A549 (cell line): ENCODE measurements at regions of chr1 and their contacts with region 1.

Region 1: GRCh38 chr1:23344111-23344986 is at the start of gene HNRNPR:
- DNase-seq: peak; percentile 90 to 100
- ATAC-seq: peak; percentile 97 to 98
- H3K4me3 ChIP-seq: peak within 1 kb of the TSS; percentile 93
- H3K27ac ChIP-seq: peak within 1 kb of the TSS; percentile 98 to 100
- H3K4me1 ChIP-seq: peaks cover 27% of the 10 kb centered on the region
- CTCF ChIP-seq: no peak
- EP300 ChIP-seq: no peak
- POLR2A ChIP-seq: peak; percentile 60
- RAD21 ChIP-seq: no peak; a peak in 2 of 5 replicates
- polyA plus RNA-seq, gene HNRNPR: 241 and 281 TPM in 2 replicates

Region 2: DNA sequence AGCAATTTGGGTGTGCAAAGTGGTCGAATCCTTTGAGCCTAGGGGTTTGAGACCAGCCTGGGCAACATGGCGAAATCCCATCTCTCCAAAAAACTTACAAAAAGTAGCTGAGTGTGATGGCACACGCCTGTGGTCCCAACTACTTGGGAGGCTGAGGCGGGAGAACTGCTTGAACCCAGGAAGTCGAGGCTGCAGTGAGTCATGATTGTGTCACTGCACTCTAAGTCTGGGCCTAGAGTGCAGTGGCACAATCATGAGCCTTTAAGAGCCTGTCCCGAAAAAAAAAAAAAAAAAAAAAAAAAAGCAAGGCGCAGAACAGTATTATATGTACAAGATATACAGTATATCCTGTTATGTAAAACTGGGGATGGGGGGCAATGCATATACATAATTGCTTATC is 101.9 kb before region 1 on chr1:
- CTCF ChIA-PET with region 1: no interaction called
- POLR2A ChIA-PET with region 1: no interaction called
- DNase-seq: no peak
- ATAC-seq: no peak
- H3K4me3 ChIP-seq: no peak overlapping the region
- H3K27ac ChIP-seq: no peak overlapping the region
- H3K4me1 ChIP-seq: 0 out of 3 replicates have a peak, but pooled peaks cover 2% of the 10 kb centered on the region
- CTCF ChIP-seq: no peak
- EP300 ChIP-seq: no peak
- POLR2A ChIP-seq: no peak
- RAD21 ChIP-seq: no peak

Region 3: GRCh38 chr1:23367791-23368561 is 23.6 kb after region 1 on chr1:
- CTCF ChIA-PET with region 1: interaction called, 9 read pairs
- POLR2A ChIA-PET with region 1: interaction called, 33 read pairs
- DNase-seq: peak; percentile 93 to 98
- ATAC-seq: peak; percentile 96
- H3K4me3 ChIP-seq: peak overlapping the region; percentile 87
- H3K27ac ChIP-seq: peak overlapping the region; percentile 98 to 99
- H3K4me1 ChIP-seq: peaks cover 17% of the 10 kb centered on the region
- CTCF ChIP-seq: no peak
- EP300 ChIP-seq: no peak
- POLR2A ChIP-seq: peak; percentile 40
- RAD21 ChIP-seq: no peak

Region 4: GRCh38 chr1:23376890-23377811 is 32.8 kb after region 1 on chr1:
- CTCF ChIA-PET with region 1: no interaction called
- POLR2A ChIA-PET with region 1: interaction called, 12 read pairs
- DNase-seq: peak; percentile 77 to 91
- ATAC-seq: peak; percentile 97 to 98
- H3K4me3 ChIP-seq: no peak overlapping the region
- H3K27ac ChIP-seq: peak overlapping the region; percentile 86 to 90
- H3K4me1 ChIP-seq: peaks cover 23% of the 10 kb centered on the region
- CTCF ChIP-seq: no peak
- EP300 ChIP-seq: no peak; a peak in 1 of 5 replicates
- POLR2A ChIP-seq: no peak
- RAD21 ChIP-seq: no peak; a peak in 1 of 5 replicates

Region 5: DNA sequence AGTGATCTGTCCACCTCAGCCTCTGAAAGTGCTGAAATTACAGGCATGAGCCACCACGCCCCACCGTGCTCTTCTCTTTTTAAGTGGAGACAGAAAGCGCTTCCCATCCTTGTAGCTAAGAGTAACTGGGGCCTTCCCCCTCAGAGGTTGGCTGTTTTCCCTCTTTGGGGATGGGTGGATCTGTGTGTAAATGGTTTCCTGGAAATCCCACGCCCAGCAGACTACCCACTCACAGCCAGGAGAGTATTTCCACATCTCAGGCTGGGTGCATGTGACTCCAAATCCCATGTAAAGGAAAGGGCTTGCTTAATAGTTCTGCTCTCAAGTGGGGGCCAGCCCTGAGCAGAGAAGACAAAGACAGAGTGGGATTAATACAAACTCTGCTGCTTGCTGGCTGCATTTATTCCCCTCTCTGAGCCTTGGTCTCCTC is 99.8 kb after region 1 on chr1:
- CTCF ChIA-PET with region 1: no interaction called
- POLR2A ChIA-PET with region 1: interaction called, 11 read pairs
- DNase-seq: no peak
- ATAC-seq: no peak
- H3K4me3 ChIP-seq: no peak overlapping the region
- H3K27ac ChIP-seq: no peak overlapping the region
- H3K4me1 ChIP-seq: no peaks in the 10 kb centered on the region
- CTCF ChIP-seq: no peak
- EP300 ChIP-seq: no peak
- POLR2A ChIP-seq: no peak
- RAD21 ChIP-seq: no peak

Region 6: DNA sequence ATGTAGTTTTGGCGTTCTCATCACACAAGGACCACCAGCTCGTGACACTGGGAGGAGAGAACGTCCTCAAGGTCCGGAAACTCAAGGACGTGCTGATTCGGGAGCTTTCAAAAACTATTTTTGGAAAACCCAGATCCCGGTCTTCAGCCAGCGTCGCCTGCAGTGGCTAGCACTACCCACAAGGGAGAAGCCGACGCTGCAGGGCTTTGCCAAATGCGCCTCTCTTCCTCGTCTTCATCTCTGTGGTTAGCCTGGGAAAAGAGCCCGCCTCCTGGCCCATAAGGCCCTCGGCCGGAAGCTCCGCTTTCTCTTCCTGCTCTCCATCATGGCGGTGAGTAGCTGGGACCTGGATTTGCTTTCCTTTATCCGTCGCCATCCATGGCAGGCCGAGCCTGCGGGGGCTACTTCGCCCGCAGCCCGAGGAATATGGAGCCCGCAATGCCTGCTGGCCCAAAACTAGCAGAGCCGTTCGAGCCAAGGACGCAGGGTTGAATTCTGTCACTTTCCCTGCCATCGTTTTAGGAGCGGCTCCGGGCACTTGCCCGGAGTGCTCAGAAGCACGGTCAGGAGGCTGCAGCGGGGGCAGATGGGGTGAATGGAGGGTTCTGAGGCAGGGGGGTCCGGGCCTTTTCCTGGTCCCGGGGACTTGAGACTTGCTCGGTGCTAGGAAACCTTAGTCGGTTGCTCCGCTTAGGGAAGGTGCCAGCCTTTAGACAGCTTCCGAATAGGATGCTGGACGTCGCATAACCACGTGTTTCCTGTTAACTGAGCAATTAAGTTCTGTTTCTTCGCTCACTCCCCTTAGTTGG is 347.4 kb after region 1 on chr1 and contains the start of gene RPL11:
- CTCF ChIA-PET with region 1: interaction called, 3 read pairs
- POLR2A ChIA-PET with region 1: interaction called, 13 read pairs
- DNase-seq: peak; percentile 83 to 95
- ATAC-seq: peak; percentile 99
- H3K4me3 ChIP-seq: peak within 1 kb of the TSS; percentile 97
- H3K27ac ChIP-seq: peak within 1 kb of the TSS; percentile 83 to 98
- H3K4me1 ChIP-seq: peaks cover 37% of the 10 kb centered on the region
- CTCF ChIP-seq: peak; percentile 38
- EP300 ChIP-seq: no peak
- POLR2A ChIP-seq: peak; percentile 76
- RAD21 ChIP-seq: 0 out of 5 replicates have a peak, but pooled peaks of 1 of the 2 experiments have one; percentile 26
- polyA plus RNA-seq, gene RPL11: 979 and 1,292 TPM in 2 replicates

Region 7: GRCh38 chr1:24705260-24706073 is 1361.1 kb after region 1 on chr1:
- CTCF ChIA-PET with region 1: no interaction called
- POLR2A ChIA-PET with region 1: interaction called, 12 read pairs
- DNase-seq: peak; percentile 91 to 95
- ATAC-seq: peak; percentile 98 to 99
- H3K4me3 ChIP-seq: peak overlapping the region; percentile 33
- H3K27ac ChIP-seq: peak overlapping the region; percentile 67 to 89
- H3K4me1 ChIP-seq: peaks cover 18% of the 10 kb centered on the region
- CTCF ChIP-seq: no peak
- EP300 ChIP-seq: no peak
- POLR2A ChIP-seq: no peak
- RAD21 ChIP-seq: no peak